CD8-positive, alpha-beta T cell (primary cell): ENCODE measurements at regions of chr16 and their contacts with region 1.

Region 1: GRCh38 chr16:89795676-89796075 is 20.8 kb downstream of the FANCA start:
- DNase-seq: no peak
- ATAC-seq: no peak
- H3K4me3 ChIP-seq: no peak overlapping the region
- H3K4me3 Mint-ChIP-seq: no peak overlapping the region
- H3K27ac ChIP-seq: no peak overlapping the region
- H3K27ac Mint-ChIP-seq: no peak overlapping the region
- H3K4me1 ChIP-seq: no peaks in the 10 kb centered on the region
- H3K4me1 Mint-ChIP-seq: peaks cover 13% of the 10 kb centered on the region
- H3K27me3 ChIP-seq: no peaks in the 10 kb centered on the region
- H3K27me3 Mint-ChIP-seq: no peaks in the 10 kb centered on the region
- CTCF ChIP-seq: no peak

Region 2: GRCh38 chr16:89749647-89750046 is 46.0 kb before region 1 on chr16:
- CTCF ChIA-PET with region 1: interaction called, 8 read pairs
- POLR2A ChIA-PET with region 1: interaction called, 3 read pairs
- intact Hi-C with region 1: loop called in 1 of 2 experiments (anchors 5 kb)
- DNase-seq: no peak
- ATAC-seq: no peak
- H3K4me3 ChIP-seq: no peak overlapping the region
- H3K4me3 Mint-ChIP-seq: no peak overlapping the region
- H3K27ac ChIP-seq: no peak overlapping the region
- H3K27ac Mint-ChIP-seq: no peak overlapping the region
- H3K4me1 ChIP-seq: peaks cover 27% of the 10 kb centered on the region
- H3K4me1 Mint-ChIP-seq: peaks cover 15% of the 10 kb centered on the region
- H3K27me3 ChIP-seq: no peaks in the 10 kb centered on the region
- H3K27me3 Mint-ChIP-seq: no peaks in the 10 kb centered on the region
- CTCF ChIP-seq: no peak

Region 3: GRCh38 chr16:89764711-89765201 is 30.9 kb before region 1 on chr16:
- CTCF ChIA-PET with region 1: interaction called, 13 read pairs
- POLR2A ChIA-PET with region 1: interaction called, 3 read pairs
- intact Hi-C with region 1: no loop called
- DNase-seq: peak in 7 of 9 experiments; percentile 20 to 75 (median 54)
- ATAC-seq: peak; percentile 54
- H3K4me3 ChIP-seq: peak overlapping the region in 1 of 2 experiments; percentile 59
- H3K4me3 Mint-ChIP-seq: peak overlapping the region; percentile 79
- H3K27ac ChIP-seq: peak overlapping the region; percentile 1 to 88
- H3K27ac Mint-ChIP-seq: peak overlapping the region; percentile 89
- H3K4me1 ChIP-seq: peaks cover 15% of the 10 kb centered on the region
- H3K4me1 Mint-ChIP-seq: peaks cover 38% of the 10 kb centered on the region
- H3K27me3 ChIP-seq: no peaks in the 10 kb centered on the region
- H3K27me3 Mint-ChIP-seq: no peaks in the 10 kb centered on the region
- CTCF ChIP-seq: no peak

Region 4: DNA sequence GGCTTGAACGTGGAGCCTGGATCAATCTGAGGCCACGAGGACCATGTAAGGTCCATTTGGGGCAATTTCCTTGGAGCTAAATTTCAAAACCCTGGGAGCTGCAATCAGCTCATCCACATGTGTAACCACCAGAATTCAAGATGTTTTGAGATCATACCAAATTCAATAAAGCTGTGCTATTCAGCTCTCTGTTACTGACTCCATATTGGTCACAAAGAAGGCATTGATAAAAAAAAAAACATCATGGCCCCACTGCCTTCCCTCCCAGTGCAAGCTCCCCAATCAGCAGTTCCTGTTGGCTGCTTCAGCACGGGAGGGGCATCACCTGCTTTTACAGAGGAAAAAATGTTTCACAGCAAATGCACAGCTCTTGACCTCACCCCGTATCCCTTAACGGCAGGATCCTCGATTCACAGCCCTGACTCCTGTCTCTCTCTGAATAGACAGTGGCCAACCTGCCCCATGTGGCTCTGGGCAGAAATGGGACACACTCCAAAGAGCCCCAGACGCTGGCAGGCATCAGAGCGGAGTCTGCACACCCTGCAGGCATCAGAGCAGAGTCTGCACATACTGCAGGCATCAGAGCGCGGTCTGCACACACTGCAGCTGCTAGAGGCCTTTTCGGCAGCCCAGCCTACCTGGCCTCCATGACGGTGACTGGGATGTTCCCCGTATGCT is 16.3 kb before region 1 on chr16:
- CTCF ChIA-PET with region 1: interaction called, 18 read pairs
- POLR2A ChIA-PET with region 1: no interaction called
- intact Hi-C with region 1: no loop called
- DNase-seq: no peak
- ATAC-seq: no peak
- H3K4me3 ChIP-seq: no peak overlapping the region
- H3K4me3 Mint-ChIP-seq: no peak overlapping the region
- H3K27ac ChIP-seq: no peak overlapping the region
- H3K27ac Mint-ChIP-seq: no peak overlapping the region
- H3K4me1 ChIP-seq: peaks cover 7% of the 10 kb centered on the region
- H3K4me1 Mint-ChIP-seq: peaks cover 8% of the 10 kb centered on the region
- H3K27me3 ChIP-seq: no peaks in the 10 kb centered on the region
- H3K27me3 Mint-ChIP-seq: no peaks in the 10 kb centered on the region
- CTCF ChIP-seq: no peak

Region 5: DNA sequence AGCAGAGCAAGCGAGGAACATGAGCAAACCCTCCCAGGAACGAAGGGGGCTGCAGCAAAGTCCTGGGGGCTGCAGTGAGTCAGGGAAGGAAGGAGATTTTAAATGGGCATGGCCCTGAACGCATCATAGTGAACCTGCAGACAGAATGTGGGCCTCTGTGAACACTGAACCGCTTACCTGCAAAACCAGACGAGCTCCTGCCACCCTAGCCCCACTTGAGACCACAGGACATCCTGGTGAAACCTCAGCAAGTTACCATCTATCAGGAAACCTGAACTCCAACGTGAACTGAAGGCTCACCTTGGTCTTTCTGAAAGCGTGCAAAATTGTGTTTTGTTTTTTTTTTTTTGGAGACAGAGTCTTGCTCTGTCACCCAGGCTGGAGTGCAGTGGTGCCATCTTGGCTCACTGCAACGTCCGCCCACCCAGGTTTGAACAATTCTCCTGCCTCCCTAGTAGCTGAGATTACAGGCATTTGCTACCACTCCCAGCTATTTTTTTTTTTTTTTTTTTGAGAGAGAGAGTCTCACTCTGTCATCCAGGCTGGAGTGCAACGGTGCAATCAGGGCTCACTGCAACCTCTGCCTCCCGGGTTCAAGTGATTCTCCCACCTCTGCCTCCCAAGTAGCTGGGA is 10.0 kb before region 1 on chr16:
- CTCF ChIA-PET with region 1: interaction called, 18 read pairs
- POLR2A ChIA-PET with region 1: no interaction called
- intact Hi-C with region 1: no loop called
- DNase-seq: peak; percentile 22 to 85 (median 65)
- ATAC-seq: peak; percentile 68
- H3K4me3 ChIP-seq: no peak overlapping the region
- H3K4me3 Mint-ChIP-seq: peak overlapping the region; percentile 57
- H3K27ac ChIP-seq: peak overlapping the region in 1 of 2 experiments; percentile 15
- H3K27ac Mint-ChIP-seq: peak overlapping the region; percentile 91
- H3K4me1 ChIP-seq: peaks cover 34% of the 10 kb centered on the region
- H3K4me1 Mint-ChIP-seq: peaks cover 30% of the 10 kb centered on the region
- H3K27me3 ChIP-seq: no peaks in the 10 kb centered on the region
- H3K27me3 Mint-ChIP-seq: no peaks in the 10 kb centered on the region
- CTCF ChIP-seq: no peak

Region 6: DNA sequence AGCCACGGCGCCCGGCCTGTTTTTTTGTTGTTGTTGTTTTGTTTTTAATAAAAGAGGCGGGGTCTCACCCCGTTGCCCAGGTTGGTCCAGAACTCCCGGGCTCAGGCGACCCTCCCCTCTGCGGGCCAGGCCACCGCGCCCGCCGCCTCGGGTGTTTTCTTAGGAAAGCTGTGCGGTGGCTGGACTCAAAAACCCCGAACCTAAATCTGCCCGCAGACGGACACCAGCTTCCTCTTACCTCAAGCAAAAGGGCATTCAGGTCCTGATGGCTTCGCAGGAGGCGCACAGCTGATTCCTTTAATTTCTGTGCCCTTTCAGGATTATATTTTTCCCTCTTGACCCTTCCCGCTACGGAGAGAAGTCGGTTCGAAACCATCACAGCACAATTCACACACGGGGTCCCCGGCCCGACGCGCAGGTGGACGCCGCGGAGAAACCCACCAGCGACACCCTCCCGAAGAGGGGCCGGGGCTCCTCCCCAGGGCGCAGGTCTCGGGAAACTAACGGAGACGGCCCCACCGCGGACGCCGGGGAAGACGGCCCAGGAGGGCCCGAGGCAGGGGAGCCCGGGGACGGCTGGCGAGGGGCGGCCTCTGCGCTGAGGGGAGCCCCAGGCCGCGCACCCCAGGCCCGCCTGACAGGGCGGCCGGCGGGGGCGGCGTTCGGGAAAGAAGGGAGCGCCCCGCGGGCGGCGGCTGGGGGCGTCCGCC is 20.1 kb after region 1 on chr16:
- CTCF ChIA-PET with region 1: interaction called, 6 read pairs
- POLR2A ChIA-PET with region 1: no interaction called
- intact Hi-C with region 1: loop called in 1 of 2 experiments (anchors 1 kb)
- DNase-seq: peak in 1 of 9 experiments; percentile 19
- ATAC-seq: peak; percentile 12
- H3K4me3 ChIP-seq: peak overlapping the region in 1 of 2 experiments; percentile 34
- H3K4me3 Mint-ChIP-seq: peak overlapping the region; percentile 80
- H3K27ac ChIP-seq: no peak overlapping the region
- H3K27ac Mint-ChIP-seq: no peak overlapping the region
- H3K4me1 ChIP-seq: peaks cover 13% of the 10 kb centered on the region
- H3K4me1 Mint-ChIP-seq: peaks cover 10% of the 10 kb centered on the region
- H3K27me3 ChIP-seq: peaks cover 0 to 7% of the 10 kb centered on the region in 2 experiments
- H3K27me3 Mint-ChIP-seq: no peaks in the 10 kb centered on the region
- CTCF ChIP-seq: no peak